ENCODE measurements at regions of chr17 and their contacts with region 1.

Region 1: GRCh38 chr17:40399185-40399584 is 18.5 kb downstream of the TOP2A start:
- DNase-seq: no peak
- H3K4me3 Mint-ChIP-seq: no peak overlapping the region
- H3K27ac Mint-ChIP-seq: no peak overlapping the region
- H3K4me1 Mint-ChIP-seq: no peaks in the 10 kb centered on the region
- H3K27me3 Mint-ChIP-seq: no peaks in the 10 kb centered on the region
- CTCF ChIP-seq: no peak

Region 2: DNA sequence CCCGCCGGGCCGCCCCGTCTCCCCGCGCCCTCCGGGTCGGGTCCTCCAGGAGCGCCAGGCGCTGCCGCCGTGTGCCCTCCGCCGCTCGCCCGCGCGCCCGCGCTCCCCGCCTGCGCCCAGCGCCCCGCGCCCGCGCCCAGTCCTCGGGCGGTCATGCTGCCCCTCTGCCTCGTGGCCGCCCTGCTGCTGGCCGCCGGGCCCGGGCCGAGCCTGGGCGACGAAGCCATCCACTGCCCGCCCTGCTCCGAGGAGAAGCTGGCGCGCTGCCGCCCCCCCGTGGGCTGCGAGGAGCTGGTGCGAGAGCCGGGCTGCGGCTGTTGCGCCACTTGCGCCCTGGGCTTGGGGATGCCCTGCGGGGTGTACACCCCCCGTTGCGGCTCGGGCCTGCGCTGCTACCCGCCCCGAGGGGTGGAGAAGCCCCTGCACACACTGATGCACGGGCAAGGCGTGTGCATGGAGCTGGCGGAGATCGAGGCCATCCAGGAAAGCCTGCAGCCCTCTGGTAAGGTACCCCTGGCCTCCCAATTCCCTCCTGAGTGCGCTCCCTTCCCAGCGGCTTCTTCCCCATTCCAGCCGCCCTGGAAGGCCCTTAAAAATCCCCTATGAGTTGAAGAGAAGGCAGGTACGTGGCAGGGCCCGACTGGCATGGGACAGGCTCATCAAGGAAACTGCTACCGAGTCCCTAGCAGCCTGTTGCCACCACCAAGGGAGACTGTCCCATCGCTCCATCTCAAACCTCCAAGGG is 44.6 kb after region 1 on chr17:
- CTCF ChIA-PET with region 1: interaction called, 3 read pairs
- intact Hi-C with region 1: loop called (anchors 2 kb)
- DNase-seq: peak; percentile 100
- H3K4me3 Mint-ChIP-seq: peak overlapping the region; percentile 1
- H3K27ac Mint-ChIP-seq: no peak overlapping the region
- H3K4me1 Mint-ChIP-seq: peaks cover 35% of the 10 kb centered on the region
- H3K27me3 Mint-ChIP-seq: peaks cover 37% of the 10 kb centered on the region
- CTCF ChIP-seq: no peak

Region 3: DNA sequence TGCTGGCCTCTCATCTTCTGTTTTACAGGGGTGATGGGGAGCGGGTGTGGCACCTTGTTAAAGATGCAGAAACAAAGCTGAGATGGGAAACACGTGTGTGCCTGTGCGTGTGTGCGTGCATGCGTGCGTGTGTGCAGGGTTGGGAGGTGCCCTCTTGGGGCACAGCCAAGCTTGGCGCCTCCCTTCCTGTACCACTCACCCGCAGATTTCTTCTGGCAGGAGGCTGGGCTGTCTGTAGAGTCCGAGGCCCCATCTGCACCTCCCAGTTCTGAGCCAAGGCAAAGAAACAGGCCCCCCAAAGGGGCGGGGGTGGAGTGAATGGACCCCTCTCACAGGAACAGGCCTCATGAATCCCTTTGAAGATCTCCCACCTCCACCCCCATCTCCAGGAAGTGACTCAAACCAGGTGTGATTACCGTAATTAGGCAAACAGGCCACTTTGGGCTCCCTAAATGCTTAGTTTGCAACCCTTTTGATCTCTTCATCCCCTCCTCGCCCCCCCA is 81.4 kb after region 1 on chr17:
- CTCF ChIA-PET with region 1: interaction called, 9 read pairs
- intact Hi-C with region 1: loop called (anchors 1 kb)
- DNase-seq: peak; percentile 91
- H3K4me3 Mint-ChIP-seq: no peak overlapping the region
- H3K27ac Mint-ChIP-seq: no peak overlapping the region
- H3K4me1 Mint-ChIP-seq: peaks cover 25% of the 10 kb centered on the region
- H3K27me3 Mint-ChIP-seq: peaks cover 36% of the 10 kb centered on the region
- CTCF ChIP-seq: no peak

Region 4: DNA sequence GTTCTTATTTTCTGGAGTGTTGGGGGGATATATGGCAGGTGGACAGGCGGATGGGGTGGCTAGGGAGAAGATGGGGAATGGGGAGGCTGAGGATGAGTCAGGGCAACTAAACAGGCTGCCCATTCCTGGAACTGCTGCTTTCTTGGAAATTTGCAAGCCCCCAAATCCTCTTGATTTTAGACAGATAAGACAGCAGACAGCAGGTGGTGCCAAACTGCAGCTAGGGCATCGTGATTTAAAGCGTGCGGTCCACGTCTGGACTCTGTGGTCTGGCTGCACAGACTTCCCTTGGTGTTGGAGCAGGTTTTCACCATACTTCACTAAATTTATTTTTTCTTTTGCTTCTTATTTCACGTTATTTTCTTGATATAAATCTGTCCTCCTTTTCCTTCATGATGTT is 315.3 kb after region 1 on chr17:
- CTCF ChIA-PET with region 1: no interaction called
- intact Hi-C with region 1: loop called (anchors 10 kb)
- DNase-seq: no peak
- H3K4me3 Mint-ChIP-seq: no peak overlapping the region
- H3K27ac Mint-ChIP-seq: no peak overlapping the region
- H3K4me1 Mint-ChIP-seq: no peaks in the 10 kb centered on the region
- H3K27me3 Mint-ChIP-seq: peaks cover 60% of the 10 kb centered on the region
- CTCF ChIP-seq: peak; percentile 66